ENCODE measurements at regions of chr3 and their contacts with region 1.

Region 1: DNA sequence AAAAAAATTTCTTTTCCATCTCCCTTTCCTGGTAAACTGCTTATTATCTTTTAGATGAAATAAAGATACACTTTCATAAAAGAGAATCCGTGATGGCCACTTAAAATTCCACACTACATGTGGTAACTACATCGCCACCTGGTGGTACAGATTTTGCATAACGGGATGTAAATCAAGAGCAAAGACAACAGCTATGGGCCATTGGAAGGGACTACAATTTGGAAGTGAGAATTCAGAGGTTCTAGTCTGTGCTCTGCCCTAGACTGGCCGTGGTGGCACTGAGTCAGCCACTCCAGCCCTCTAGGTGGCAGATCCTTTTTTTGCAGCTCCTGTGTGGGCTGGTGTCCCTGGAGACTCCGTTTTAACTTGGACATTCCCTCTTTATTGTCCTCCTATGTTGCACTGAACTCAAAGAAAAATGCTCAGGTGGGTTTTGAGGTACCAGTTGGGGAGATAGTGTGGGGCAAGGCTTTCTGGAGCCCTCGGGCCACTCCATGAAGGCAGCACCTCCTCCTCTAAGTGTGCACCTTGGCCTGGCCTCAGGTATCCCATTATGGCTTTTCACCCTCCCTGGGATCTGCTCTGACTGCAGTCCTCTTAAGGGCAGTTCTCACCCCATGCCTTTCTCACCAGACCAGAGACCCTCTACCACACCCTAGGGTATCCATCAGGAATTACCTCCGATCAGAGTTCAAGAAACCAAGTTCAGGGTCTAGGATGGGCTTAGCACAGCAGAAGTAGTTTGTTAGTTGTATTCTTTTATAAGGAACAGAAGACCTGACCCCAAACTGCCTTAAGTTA is 54.9 kb downstream of the SPSB4 start:
- DNase-seq: peak; percentile 22 to 84
- ATAC-seq: peak in 2 of 3 donors; percentile 62 to 73
- H3K4me3 ChIP-seq: no peak overlapping the region
- H3K4me3 Mint-ChIP-seq: no peak overlapping the region
- H3K27ac ChIP-seq: no peak overlapping the region
- H3K27ac Mint-ChIP-seq: no peak overlapping the region
- H3K4me1 ChIP-seq: no peaks in the 10 kb centered on the region
- H3K4me1 Mint-ChIP-seq: no peaks in the 10 kb centered on the region
- H3K27me3 ChIP-seq: no peaks in the 10 kb centered on the region
- H3K27me3 Mint-ChIP-seq: peaks cover 6% of the 10 kb centered on the region in 2 donors
- CTCF ChIP-seq: peak; percentile 82

Region 2: GRCh38 chr3:139427283-139427993 is 1678.6 kb before region 1 on chr3:
- intact Hi-C with region 1: loop called (anchors 10 kb)
- DNase-seq: peak in 1 of 2 donors; percentile 62
- ATAC-seq: peak in 2 of 3 donors; percentile 46 to 74
- H3K4me3 ChIP-seq: no peak overlapping the region
- H3K4me3 Mint-ChIP-seq: no peak overlapping the region
- H3K27ac ChIP-seq: no peak overlapping the region
- H3K27ac Mint-ChIP-seq: no peak overlapping the region
- H3K4me1 ChIP-seq: no peaks in the 10 kb centered on the region
- H3K4me1 Mint-ChIP-seq: peaks cover 0 to 4% of the 10 kb centered on the region in 2 donors
- H3K27me3 ChIP-seq: no peaks in the 10 kb centered on the region
- H3K27me3 Mint-ChIP-seq: no peaks in the 10 kb centered on the region
- CTCF ChIP-seq: peak; percentile 71

Region 3: DNA sequence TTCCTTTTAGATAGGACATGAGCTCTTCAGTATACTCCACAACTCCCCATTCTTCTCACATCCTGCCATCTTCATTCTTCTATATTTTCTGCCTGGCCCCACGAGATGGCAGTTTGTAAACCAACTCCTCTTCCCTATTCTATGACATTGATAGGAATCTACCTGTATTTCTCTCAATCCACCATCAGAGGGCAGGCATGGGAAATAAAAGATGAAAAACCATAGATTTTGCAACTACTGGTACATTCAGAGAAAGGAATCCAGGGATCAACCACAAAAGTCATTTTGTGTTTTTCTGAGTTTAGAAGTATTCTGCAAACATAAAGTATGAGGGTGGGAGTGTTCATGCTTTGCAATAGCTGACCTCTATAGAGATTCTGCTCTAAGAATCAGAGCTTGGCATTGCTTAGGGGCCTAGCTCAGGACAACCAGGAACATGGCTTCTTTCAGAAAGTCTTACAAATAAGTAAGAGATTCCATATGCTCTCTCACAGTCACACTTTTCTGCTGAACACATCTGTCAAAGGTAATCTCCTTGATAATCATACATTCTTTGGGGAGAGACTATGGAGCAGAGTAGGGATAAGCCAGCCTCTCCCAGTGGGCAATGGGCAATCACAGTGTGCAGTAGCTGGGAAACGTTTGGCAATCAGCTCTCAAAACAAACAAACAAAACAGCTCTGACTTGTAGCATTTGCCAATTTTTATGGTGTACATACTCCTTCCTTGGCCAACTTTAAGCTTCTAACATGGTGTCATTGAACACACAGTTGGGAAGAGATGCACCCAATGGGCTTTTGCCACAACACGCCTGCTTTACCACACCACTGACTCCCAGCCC is 207.5 kb before region 1 on chr3:
- intact Hi-C with region 1: loop called (anchors 5 kb)
- DNase-seq: peak in 1 of 2 donors; percentile 65
- ATAC-seq: peak in 2 of 3 donors; percentile 57 to 70
- H3K4me3 ChIP-seq: no peak overlapping the region
- H3K4me3 Mint-ChIP-seq: no peak overlapping the region
- H3K27ac ChIP-seq: no peak overlapping the region
- H3K27ac Mint-ChIP-seq: no peak overlapping the region
- H3K4me1 ChIP-seq: no peaks in the 10 kb centered on the region
- H3K4me1 Mint-ChIP-seq: no peaks in the 10 kb centered on the region
- H3K27me3 ChIP-seq: no peaks in the 10 kb centered on the region
- H3K27me3 Mint-ChIP-seq: peaks cover 12 to 35% of the 10 kb centered on the region in 2 donors
- CTCF ChIP-seq: peak; percentile 48

Region 4: GRCh38 chr3:141000027-141000663 is 105.9 kb before region 1 on chr3:
- intact Hi-C with region 1: loop called (anchors 1 kb)
- DNase-seq: peak in 1 of 2 donors; percentile 73
- ATAC-seq: peak; percentile 64 to 95 (median 65)
- H3K4me3 ChIP-seq: no peak overlapping the region
- H3K4me3 Mint-ChIP-seq: no peak overlapping the region
- H3K27ac ChIP-seq: no peak overlapping the region
- H3K27ac Mint-ChIP-seq: no peak overlapping the region
- H3K4me1 ChIP-seq: no peaks in the 10 kb centered on the region
- H3K4me1 Mint-ChIP-seq: no peaks in the 10 kb centered on the region
- H3K27me3 ChIP-seq: no peaks in the 10 kb centered on the region
- H3K27me3 Mint-ChIP-seq: no peaks in the 10 kb centered on the region
- CTCF ChIP-seq: peak; percentile 53

Measured in natural killer cell (primary cell).